A549 (cell line): ENCODE measurements at regions of chr9 and their contacts with region 1.

Region 1: GRCh38 chr9:78121488-78121887 is 89.9 kb upstream of the GNAQ start:
- DNase-seq: peak; percentile 21 to 55
- ATAC-seq: peak in 1 of 2 experiments; percentile 74; a peak in 3 of 6 replicates
- H3K4me3 ChIP-seq: no peak overlapping the region
- H3K27ac ChIP-seq: no peak overlapping the region
- H3K4me1 ChIP-seq: no peaks in the 10 kb centered on the region
- CTCF ChIP-seq: peak; percentile 69
- EP300 ChIP-seq: no peak
- POLR2A ChIP-seq: no peak
- RAD21 ChIP-seq: peak; percentile 74 to 76

Region 2: DNA sequence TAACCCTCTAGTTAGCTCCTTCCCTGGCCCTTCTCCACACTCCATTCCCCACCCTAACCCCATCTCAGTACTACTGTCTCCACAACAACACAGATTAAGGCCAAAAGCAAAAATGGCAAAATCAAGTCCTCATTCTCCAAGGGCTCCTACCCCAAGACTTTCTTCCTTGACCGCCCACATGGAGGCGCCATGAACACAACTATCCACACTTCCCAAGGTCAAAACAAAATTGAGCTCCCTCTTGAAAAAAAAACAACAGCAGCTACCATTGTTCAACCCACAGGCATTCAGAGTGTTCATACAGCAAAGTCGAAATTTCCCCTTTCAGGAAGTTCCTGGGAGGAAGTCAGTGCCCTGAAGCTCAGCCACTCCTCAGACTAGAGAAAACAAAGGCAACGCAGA is 144.3 kb before region 1 on chr9:
- CTCF ChIA-PET with region 1: interaction called, 10 read pairs
- POLR2A ChIA-PET with region 1: no interaction called
- DNase-seq: peak; percentile 16 to 71
- ATAC-seq: peak in 1 of 2 experiments; percentile 77; a peak in 4 of 6 replicates
- H3K4me3 ChIP-seq: no peak overlapping the region
- H3K27ac ChIP-seq: 0 out of 6 replicates have a peak overlapping the region, but pooled peaks of 1 of the 2 experiments have one; percentile 14
- H3K4me1 ChIP-seq: peaks cover 47% of the 10 kb centered on the region
- CTCF ChIP-seq: peak; percentile 57
- EP300 ChIP-seq: no peak
- POLR2A ChIP-seq: no peak
- RAD21 ChIP-seq: peak; percentile 66 to 68